GM13976 (cell line): ENCODE measurements at regions of chr5 and their contacts with region 1.

Region 1: DNA sequence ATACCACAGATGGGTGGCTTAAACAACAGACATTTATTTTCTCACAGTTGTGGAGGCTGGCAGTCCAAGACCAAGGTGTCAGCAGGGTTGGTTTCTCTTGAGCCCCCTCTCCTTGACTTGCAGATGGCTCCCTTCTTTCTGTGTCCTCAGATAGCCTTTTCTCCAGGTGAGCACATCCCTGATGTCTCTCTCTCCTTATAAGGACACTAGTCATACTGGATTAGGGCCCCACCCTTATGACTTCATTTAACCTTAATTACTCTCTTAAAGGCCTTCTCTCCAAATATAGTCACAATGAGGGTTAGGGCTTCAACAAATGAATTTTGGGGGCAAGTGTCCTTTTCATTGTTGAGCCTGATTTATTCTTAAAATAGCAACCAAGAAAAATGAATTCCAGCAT is 14.7 kb downstream of the PTGER4 start:
- DNase-seq: no peak
- CTCF ChIP-seq: no peak

Region 2: DNA sequence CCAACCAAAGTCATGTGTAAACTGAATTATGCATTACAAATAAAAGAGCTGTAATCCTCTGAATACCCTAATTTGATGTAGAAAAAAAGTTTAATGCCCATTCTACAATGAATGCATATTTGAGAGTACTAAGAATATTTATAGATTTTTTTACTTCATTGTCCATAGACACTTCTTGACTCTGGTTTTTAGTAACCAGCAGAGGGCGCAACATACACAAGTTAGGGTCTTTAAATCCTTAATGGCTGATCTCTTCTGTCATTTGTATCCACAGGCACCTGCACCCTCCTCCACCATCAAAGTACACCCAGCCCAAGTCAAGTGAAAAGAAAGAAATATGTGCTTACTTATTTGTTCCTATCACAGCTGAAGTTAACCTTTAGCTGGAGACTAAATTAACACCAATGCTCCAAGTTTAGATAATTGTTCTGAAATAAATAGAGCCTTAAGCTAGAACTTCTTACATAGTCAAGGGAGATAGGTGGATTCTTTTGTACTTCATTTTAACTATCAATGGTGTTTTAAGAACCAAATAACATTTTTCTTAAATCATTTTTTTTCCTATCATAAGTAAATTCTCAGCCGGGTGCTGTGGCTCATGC is 745.5 kb before region 1 on chr5:
- in situ Hi-C with region 1: loop called (anchors 10 kb)
- DNase-seq: peak; percentile 39
- CTCF ChIP-seq: peak; percentile 38

Region 3: GRCh38 chr5:40605295-40605958 is 89.0 kb before region 1 on chr5:
- in situ Hi-C with region 1: no loop called
- DNase-seq: no peak
- CTCF ChIP-seq: no peak

Region 4: DNA sequence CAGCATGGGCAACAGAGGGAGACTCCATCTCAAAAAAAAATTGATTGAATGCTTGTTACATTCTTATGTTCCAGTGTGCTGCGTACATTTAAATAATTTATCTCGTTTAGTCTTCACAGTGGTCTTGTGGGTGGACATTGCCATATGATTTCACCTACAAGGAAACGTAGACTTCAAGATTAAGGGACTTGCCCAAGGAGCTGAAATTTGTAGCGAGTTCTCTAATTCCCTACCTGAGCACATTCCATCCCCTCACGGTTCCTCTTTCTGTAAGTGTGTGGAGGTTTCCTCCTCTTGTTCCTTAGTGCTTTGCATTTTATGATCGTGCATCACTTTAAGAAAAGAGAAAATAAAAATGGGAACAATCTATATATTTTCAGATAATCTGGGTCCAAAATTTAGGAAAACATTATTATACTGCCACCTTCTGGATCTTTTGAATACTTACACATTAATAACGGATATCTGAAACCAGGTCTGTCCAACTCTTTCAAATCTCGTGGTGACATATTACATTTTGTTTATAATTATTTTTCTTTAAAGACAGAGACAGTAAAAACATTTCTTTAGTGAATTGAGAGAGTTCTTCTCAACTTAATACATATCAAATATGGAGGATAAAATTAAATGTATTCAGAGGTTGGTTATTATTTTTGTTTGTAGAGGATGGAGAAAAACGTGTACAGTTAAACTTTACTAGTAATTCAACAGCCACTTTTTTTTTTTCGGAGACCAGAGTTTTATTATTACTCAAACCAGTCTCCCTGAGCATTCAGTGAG is 184.9 kb after region 1 on chr5:
- in situ Hi-C with region 1: no loop called
- DNase-seq: peak; percentile 38
- CTCF ChIP-seq: peak; percentile 4

Region 5: DNA sequence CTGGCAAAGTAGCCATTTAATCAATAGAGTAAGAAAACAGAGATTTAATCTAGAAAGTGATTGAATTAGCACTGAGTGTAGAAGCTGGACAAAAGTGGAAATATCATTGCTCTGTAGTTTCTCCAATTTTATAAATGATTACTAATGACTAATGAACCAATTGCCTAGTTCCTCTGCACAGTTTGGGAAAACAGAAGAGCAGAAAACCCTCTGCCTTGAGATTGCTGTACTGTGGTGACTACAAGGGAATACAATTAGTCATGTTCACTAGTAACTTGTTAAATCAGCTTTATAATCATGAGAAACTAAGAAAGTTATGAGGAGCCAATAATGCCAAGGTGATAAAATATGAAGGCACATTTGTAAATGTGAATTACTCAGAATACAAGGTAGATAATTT is 540.0 kb after region 1 on chr5:
- in situ Hi-C with region 1: no loop called
- DNase-seq: no peak
- CTCF ChIP-seq: no peak